ACHN (cell line): ENCODE measurements at regions of chr6 and their contacts with region 1.

Region 1: GRCh38 chr6:100116411-100117194 is 122.6 kb upstream of the MCHR2 start:
- DNase-seq: peak; percentile 67

Region 2: GRCh38 chr6:100001915-100002388 is 114.7 kb before region 1 on chr6:
- in situ Hi-C with region 1: no loop called
- DNase-seq: peak; percentile 59

Region 3: DNA sequence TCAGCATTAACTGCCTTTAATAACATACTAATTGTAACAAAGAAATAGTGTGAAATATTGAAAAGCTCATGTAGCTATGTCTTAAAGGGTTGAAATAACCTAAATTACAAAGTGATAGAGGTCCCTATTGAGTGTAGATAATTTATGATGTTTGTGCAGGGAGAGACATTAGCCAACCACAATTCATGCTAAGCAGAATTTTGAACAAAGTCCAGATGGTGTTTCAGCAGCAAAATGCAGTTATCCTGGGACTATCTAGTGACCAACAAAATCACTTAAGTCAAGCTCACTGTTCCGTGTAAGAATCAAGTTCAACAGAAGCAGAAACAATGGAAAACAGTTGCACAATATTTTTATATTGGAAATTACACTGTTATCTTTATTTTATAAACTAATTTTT is 129.6 kb after region 1 on chr6:
- in situ Hi-C with region 1: no loop called
- DNase-seq: no peak

Region 4: GRCh38 chr6:100276311-100277057 is 159.9 kb after region 1 on chr6:
- in situ Hi-C with region 1: no loop called
- DNase-seq: no peak

Region 5: DNA sequence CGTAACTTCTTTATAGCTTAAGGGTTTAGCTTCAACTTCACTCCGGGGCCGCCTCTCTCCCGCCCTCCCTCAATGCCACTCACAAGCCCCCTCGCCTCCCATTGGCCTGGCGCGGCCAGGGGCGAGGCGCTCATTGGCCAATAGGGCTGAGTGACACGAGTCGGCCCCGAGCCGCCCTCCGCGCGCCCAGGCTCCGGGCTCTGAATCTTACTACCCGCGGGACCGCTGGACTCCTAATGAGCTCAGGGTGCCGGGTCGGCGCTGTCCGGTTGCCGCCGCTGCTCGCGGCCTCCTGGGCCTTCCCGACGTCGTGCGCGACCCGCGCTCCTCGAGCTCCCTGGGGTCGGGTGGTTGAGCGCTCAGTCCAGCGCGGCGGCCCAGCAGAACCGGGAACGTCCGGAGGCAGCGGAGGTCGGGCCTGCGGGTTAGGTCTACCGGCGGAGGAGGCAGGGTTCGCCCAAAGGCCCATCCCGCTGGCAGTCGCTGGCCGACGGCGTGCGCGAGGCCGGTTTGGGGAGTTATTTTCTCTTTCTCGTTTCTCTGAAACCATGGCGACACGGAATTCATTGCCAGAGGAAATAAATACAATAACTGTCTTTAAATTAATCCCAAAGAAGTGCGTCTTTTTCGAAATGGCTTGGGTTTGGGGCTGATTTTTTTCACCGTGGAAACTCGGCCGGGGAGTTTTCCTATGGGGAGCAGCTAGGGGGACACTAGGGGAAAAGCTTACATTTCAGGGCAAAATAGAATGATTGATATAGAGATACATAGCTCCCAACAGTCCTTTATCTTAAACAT is 348.5 kb after region 1 on chr6 and contains the start of gene SIM1:
- in situ Hi-C with region 1: loop called (anchors 25 kb)
- DNase-seq: peak; percentile 93